ENCODE measurements at regions of chr13 and their contacts with region 1.

Region 1: GRCh38 chr13:109778102-109778542 is 8.3 kb downstream of the IRS2 start:
- DNase-seq: peak; percentile 81
- H3K4me3 Mint-ChIP-seq: peak overlapping the region; percentile 84
- H3K27ac Mint-ChIP-seq: peak overlapping the region; percentile 70
- H3K4me1 Mint-ChIP-seq: peaks cover 54% of the 10 kb centered on the region
- H3K27me3 Mint-ChIP-seq: no peaks in the 10 kb centered on the region
- CTCF ChIP-seq: no peak

Region 2: DNA sequence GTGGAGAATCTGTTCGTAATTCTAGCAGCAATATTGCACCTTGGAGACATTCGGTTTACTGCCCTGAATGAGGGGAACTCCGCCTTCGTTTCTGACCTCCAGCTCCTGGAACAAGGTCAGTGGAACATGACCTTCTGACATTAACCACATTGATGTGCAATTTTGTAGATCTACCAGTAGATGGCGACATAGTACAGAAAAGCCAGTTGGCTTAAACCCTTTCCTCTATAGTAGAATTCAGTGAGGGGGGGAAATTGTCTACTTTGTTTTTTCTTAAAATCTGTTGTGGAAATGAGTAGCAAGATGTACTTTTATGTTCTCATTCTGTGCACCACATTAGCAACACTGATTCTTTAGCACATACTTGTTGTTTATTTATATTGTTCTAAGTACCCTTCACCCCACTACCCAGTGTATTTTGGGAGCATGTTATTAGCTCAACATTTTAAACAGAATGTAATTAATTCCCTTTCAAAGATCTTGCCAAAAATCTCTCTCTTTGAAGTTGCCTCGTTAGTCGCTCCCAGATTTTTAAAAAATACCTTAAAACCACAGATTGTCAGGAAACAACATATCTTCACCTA is 816.5 kb before region 1 on chr13:
- CTCF ChIA-PET with region 1: interaction called, 10 read pairs
- POLR2A ChIA-PET with region 1: interaction called, 12 read pairs
- intact Hi-C with region 1: no loop called
- DNase-seq: peak; percentile 57
- H3K4me3 Mint-ChIP-seq: no peak overlapping the region
- H3K27ac Mint-ChIP-seq: no peak overlapping the region
- H3K4me1 Mint-ChIP-seq: peaks cover 43% of the 10 kb centered on the region
- H3K27me3 Mint-ChIP-seq: no peaks in the 10 kb centered on the region
- CTCF ChIP-seq: peak; percentile 79

Region 3: GRCh38 chr13:109156181-109156935 is 621.8 kb before region 1 on chr13:
- CTCF ChIA-PET with region 1: interaction called, 6 read pairs
- POLR2A ChIA-PET with region 1: interaction called, 39 read pairs
- intact Hi-C with region 1: no loop called
- DNase-seq: peak; percentile 82
- H3K4me3 Mint-ChIP-seq: peak overlapping the region; percentile 64
- H3K27ac Mint-ChIP-seq: peak overlapping the region; percentile 95
- H3K4me1 Mint-ChIP-seq: peaks cover 61% of the 10 kb centered on the region
- H3K27me3 Mint-ChIP-seq: no peaks in the 10 kb centered on the region
- CTCF ChIP-seq: no peak

Region 4: GRCh38 chr13:109243311-109243951 is 534.7 kb before region 1 on chr13:
- CTCF ChIA-PET with region 1: no interaction called
- POLR2A ChIA-PET with region 1: interaction called, 13 read pairs
- intact Hi-C with region 1: no loop called
- DNase-seq: peak; percentile 79
- H3K4me3 Mint-ChIP-seq: peak overlapping the region; percentile 67
- H3K27ac Mint-ChIP-seq: peak overlapping the region; percentile 89
- H3K4me1 Mint-ChIP-seq: peaks cover 34% of the 10 kb centered on the region
- H3K27me3 Mint-ChIP-seq: no peaks in the 10 kb centered on the region
- CTCF ChIP-seq: no peak

Region 5: DNA sequence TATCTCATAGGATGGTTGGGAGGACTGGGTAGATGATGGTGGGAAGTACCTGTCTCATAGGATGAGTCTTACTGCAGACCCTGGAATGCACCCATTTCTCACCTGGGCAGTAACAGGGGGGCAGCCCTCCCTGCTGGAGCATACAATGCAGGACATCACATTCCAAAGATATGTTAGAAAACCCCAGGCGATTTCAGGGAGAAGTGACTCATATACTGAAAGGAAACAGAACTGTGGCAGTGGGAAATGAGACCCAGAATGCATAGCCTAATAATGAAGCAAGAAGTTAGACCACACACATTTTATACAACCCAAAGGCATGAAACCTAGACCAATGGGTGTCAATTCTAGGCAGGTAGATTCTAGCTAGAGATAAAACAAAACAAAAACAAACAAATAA is 394.5 kb before region 1 on chr13:
- CTCF ChIA-PET with region 1: no interaction called
- POLR2A ChIA-PET with region 1: no interaction called
- intact Hi-C with region 1: loop called (anchors 5 kb)
- DNase-seq: peak; percentile 82
- H3K4me3 Mint-ChIP-seq: no peak overlapping the region
- H3K27ac Mint-ChIP-seq: peak overlapping the region; percentile 85
- H3K4me1 Mint-ChIP-seq: peaks cover 26% of the 10 kb centered on the region
- H3K27me3 Mint-ChIP-seq: no peaks in the 10 kb centered on the region
- CTCF ChIP-seq: no peak

Measured in MCF 10A (cell line).